ENCODE measurements at regions of chr20 and their contacts with region 1.

Region 1: GRCh38 chr20:3854462-3854871 is 7.8 kb downstream of the MAVS start:
- DNase-seq: no peak
- ATAC-seq: no peak
- H3K4me3 ChIP-seq: no peak overlapping the region
- H3K4me3 Mint-ChIP-seq: no peak overlapping the region
- H3K27ac ChIP-seq: no peak overlapping the region
- H3K27ac Mint-ChIP-seq: no peak overlapping the region
- H3K4me1 ChIP-seq: peaks cover 9% of the 10 kb centered on the region
- H3K4me1 Mint-ChIP-seq: peaks cover 13% of the 10 kb centered on the region
- H3K27me3 ChIP-seq: no peaks in the 10 kb centered on the region
- H3K27me3 Mint-ChIP-seq: no peaks in the 10 kb centered on the region
- CTCF ChIP-seq: no peak

Region 2: GRCh38 chr20:3753098-3753980 is 101.1 kb before region 1 on chr20:
- CTCF ChIA-PET with region 1: interaction called, 14 read pairs
- POLR2A ChIA-PET with region 1: interaction called, 3 read pairs
- intact Hi-C with region 1: loop called (anchors 1 kb)
- DNase-seq: peak; percentile 45 to 83 (median 56)
- ATAC-seq: peak; percentile 64
- H3K4me3 ChIP-seq: no peak overlapping the region
- H3K4me3 Mint-ChIP-seq: peak overlapping the region; percentile 92
- H3K27ac ChIP-seq: no peak overlapping the region
- H3K27ac Mint-ChIP-seq: peak overlapping the region; percentile 70
- H3K4me1 ChIP-seq: peaks cover 13% of the 10 kb centered on the region
- H3K4me1 Mint-ChIP-seq: peaks cover 14% of the 10 kb centered on the region
- H3K27me3 ChIP-seq: peaks cover 0 to 7% of the 10 kb centered on the region in 2 experiments
- H3K27me3 Mint-ChIP-seq: no peaks in the 10 kb centered on the region
- CTCF ChIP-seq: peak; percentile 60

Region 3: GRCh38 chr20:4413314-4414049 is 559.0 kb after region 1 on chr20:
- CTCF ChIA-PET with region 1: no interaction called
- POLR2A ChIA-PET with region 1: no interaction called
- intact Hi-C with region 1: no loop called
- DNase-seq: peak in 2 of 14 experiments; percentile 45 to 50
- ATAC-seq: no peak
- H3K4me3 ChIP-seq: no peak overlapping the region
- H3K4me3 Mint-ChIP-seq: no peak overlapping the region
- H3K27ac ChIP-seq: no peak overlapping the region
- H3K27ac Mint-ChIP-seq: no peak overlapping the region
- H3K4me1 ChIP-seq: no peaks in the 10 kb centered on the region
- H3K4me1 Mint-ChIP-seq: no peaks in the 10 kb centered on the region
- H3K27me3 ChIP-seq: no peaks in the 10 kb centered on the region
- H3K27me3 Mint-ChIP-seq: peaks cover 10% of the 10 kb centered on the region
- CTCF ChIP-seq: no peak

Region 4: DNA sequence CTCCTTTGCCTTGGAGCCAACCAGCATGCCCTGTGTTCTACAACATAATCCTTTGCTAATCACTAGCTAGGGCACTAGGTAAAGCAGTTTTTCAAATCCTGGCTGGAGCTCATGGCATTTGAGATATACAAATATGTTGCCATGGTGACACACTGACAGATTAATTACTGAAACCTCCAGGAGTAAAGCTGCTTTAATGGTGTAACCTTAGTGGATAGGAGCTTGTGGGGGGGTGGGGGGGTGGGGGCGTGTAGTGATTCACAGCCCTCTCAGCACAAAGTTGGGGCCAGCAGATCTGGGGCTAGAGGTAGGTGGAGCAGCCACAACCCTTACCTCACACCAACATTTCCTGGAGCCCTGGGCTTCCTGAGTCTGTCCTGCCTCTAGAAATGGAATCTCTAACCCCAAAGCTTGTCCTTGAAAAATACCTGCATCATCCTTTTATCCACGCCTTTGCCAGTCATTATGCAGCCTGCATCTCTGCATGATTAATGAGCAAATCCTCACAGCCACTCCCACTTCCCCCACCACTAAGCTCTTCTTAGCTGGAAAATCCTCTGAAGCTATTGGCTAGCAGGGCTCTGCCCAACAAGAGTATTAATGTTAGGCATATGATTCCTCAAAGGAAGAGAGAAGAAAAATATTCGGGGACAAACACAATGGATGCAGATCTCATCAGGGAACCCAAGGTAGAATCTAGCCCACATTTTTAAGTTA is 782.8 kb after region 1 on chr20:
- CTCF ChIA-PET with region 1: no interaction called
- POLR2A ChIA-PET with region 1: no interaction called
- intact Hi-C with region 1: no loop called
- DNase-seq: no peak
- ATAC-seq: no peak
- H3K4me3 ChIP-seq: no peak overlapping the region
- H3K4me3 Mint-ChIP-seq: no peak overlapping the region
- H3K27ac ChIP-seq: no peak overlapping the region
- H3K27ac Mint-ChIP-seq: no peak overlapping the region
- H3K4me1 ChIP-seq: peaks cover 4% of the 10 kb centered on the region
- H3K4me1 Mint-ChIP-seq: no peaks in the 10 kb centered on the region
- H3K27me3 ChIP-seq: no peaks in the 10 kb centered on the region
- H3K27me3 Mint-ChIP-seq: peaks cover 7% of the 10 kb centered on the region
- CTCF ChIP-seq: no peak

Measured in CD4-positive, alpha-beta T cell (primary cell).